GM10248 (cell line): ENCODE measurements at regions of chr11 and their contacts with region 1.

Region 1: DNA sequence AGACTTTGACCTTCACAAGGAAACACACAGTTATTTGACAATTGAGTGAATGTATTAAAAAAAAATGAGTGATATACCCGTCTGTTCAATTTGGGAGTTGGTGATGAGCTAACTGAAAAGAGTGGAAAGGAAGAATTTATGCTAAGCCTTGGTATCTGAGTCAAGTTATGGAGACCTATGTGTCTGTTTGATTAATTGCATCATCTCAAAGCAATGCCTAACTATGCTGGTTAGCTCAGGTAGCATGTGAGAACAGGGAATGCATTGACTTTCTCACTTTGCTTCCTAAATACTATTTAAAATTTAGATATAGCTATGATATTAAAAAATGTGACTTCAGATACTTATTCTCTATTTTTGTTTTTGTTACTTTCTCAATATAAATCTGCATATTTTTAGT is 110.5 kb downstream of the DDX10 start:
- DNase-seq: no peak
- CTCF ChIP-seq: no peak

Region 2: DNA sequence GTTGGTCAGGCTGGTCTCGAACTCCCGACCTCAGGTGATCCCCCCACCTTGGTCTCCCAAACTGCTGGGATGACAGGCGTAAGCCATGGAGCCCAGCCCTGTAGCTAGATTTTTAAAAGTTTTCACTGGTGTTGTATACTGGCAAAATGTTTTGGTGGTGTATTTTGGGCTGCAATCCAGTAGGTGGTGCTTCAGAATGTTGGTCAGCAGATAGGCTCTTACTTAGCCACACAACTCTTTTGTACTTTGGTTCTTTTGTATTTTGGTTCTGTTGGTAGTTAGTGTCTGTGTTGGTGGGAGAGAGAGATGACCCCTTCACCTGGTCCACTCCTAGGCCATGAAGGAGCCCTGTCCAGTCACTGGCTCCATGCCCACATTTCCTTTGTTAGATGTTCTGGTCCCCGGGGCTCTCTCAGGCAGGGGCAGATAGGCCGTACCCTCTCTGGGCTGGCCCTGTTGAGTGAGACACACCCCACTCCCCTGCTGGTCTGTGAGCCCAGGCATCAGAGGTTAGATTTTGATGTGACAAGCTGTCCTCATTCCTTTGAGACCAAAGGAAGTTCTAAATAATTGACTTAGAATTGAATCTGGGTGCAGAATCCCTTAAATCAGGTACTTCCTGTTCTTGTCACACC is 13.4 kb after region 1 on chr11:
- CTCF ChIA-PET with region 1: interaction called, 21 read pairs
- POLR2A ChIA-PET with region 1: no interaction called
- DNase-seq: peak; percentile 24
- CTCF ChIP-seq: peak; percentile 47

Region 3: GRCh38 chr11:108803776-108804175 is 28.5 kb after region 1 on chr11:
- CTCF ChIA-PET with region 1: no interaction called
- POLR2A ChIA-PET with region 1: no interaction called
- DNase-seq: no peak
- CTCF ChIP-seq: no peak